ENCODE measurements at regions of chr20 and their contacts with region 1.

Region 1: DNA sequence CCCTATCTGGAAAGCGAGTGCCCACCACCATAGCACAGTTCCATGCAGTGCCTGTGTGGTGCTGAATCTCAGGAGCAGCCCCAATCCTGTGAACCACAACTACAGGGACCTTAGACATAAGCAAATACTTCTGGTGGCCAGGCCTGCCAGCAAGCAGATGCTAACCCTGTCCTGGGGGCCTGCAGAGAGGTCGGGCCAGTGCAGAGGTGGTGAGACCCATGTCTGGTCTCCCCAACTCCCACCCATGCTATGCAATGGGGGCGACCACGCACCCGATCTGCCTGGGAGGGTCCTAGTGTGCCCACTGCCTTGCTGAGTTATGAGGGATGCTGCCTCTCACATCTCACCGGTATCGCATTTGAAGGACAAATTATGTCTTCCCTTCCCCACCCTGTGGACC is 151.6 kb upstream of the ZNF337 start:
- DNase-seq: no peak
- ATAC-seq: no peak
- H3K4me3 ChIP-seq: no peak overlapping the region
- H3K27ac ChIP-seq: no peak overlapping the region
- H3K4me1 ChIP-seq: no peaks in the 10 kb centered on the region
- H3K27me3 ChIP-seq: no peaks in the 10 kb centered on the region
- CTCF ChIP-seq: no peak

Region 2: GRCh38 chr20:26276554-26277210 is 428.5 kb after region 1 on chr20:
- CTCF ChIA-PET with region 1: interaction called, 10 read pairs
- POLR2A ChIA-PET with region 1: no interaction called
- in situ Hi-C with region 1: no loop called
- intact Hi-C with region 1: no loop called
- DNase-seq: no peak
- ATAC-seq: no peak
- H3K4me3 ChIP-seq: no peak overlapping the region
- H3K27ac ChIP-seq: no peak overlapping the region
- H3K4me1 ChIP-seq: no peaks in the 10 kb centered on the region
- H3K27me3 ChIP-seq: no peaks in the 10 kb centered on the region
- CTCF ChIP-seq: no peak